Left cardiac atrium (tissue), 4 donors: ENCODE measurements at regions of chr2 and their contacts with region 1.

Region 1: GRCh38 chr2:68196120-68196716 is 38.5 kb downstream of the PNO1 start:
- DNase-seq: peak; percentile 28
- ATAC-seq: no peak

Region 2: DNA sequence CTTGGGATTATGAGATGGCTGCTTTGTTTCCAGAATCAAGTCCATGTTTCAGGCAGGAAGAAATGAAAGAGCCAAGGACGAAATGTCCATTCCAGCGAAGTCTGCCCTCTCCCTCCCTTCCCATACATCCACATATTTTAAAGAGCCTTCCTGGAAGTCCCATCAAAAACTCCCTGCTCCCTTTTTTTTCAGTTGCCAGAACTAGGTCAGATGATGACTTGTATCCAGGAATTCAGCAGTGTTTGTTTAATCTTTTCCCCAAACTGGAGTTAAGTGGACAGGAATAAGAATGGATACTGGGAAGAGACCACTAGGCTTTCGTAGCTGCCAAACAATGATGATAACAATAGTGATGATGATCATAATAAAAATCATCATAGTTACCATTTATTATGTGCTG is 1562.6 kb before region 1 on chr2:
- intact Hi-C with region 1: no loop called
- DNase-seq: no peak
- ATAC-seq: no peak

Region 3: DNA sequence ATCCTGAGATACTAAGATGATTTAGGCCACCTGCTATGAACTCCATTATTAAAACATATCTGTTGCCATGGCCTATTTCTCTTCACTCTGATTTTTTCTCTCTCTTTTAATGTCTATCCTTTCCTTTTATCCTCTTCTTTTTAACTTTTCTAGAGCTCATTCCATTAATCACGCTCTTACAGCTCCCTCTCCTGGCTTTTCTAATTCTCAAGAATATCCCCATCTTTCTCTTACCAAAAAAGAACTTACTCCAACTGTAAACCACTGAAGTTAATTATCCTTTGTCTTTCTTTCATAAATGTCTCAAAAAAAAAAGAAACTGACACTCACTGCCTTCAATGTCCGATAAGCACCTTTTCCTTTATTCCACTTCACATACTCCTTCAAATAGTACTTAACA is 48.2 kb after region 1 on chr2:
- intact Hi-C with region 1: loop called (anchors 5 to 10 kb)
- DNase-seq: no peak
- ATAC-seq: no peak

Region 4: GRCh38 chr2:68251187-68251854 is 55.1 kb after region 1 on chr2:
- intact Hi-C with region 1: loop called (anchors 5 to 10 kb)
- DNase-seq: peak; percentile 66
- ATAC-seq: peak; percentile 45 to 63

Region 5: DNA sequence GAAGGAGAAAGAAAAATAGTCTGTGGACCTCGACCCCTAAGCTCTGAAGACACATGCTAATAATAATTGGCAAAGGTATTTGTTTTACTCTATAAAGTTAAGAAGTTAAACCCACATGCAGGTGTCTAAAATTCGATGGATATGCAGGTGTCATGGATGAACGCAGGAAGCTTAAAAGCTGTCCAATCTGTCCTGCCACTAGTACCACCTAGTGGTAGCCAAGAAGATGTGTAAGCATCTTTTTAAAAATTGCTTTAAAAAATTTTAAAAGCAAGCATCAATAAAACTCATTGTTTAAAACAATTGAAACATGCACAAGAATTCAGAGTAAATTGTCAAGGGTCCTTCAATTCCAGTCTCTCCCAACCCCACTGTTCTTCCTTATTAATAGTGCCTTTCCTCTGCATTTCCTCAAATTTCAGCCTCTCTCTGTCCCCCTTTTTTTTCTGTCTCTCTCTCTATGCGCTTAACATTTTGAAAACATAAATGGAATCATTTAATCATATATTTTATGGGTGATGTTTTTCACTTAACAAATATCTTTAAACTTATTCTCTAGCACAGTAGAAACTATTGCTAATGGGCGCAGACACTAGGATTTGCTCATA is 86.7 kb after region 1 on chr2:
- intact Hi-C with region 1: loop called (anchors 10 kb)
- DNase-seq: no peak
- ATAC-seq: peak in 1 of 2 donors; percentile 41

Region 6: DNA sequence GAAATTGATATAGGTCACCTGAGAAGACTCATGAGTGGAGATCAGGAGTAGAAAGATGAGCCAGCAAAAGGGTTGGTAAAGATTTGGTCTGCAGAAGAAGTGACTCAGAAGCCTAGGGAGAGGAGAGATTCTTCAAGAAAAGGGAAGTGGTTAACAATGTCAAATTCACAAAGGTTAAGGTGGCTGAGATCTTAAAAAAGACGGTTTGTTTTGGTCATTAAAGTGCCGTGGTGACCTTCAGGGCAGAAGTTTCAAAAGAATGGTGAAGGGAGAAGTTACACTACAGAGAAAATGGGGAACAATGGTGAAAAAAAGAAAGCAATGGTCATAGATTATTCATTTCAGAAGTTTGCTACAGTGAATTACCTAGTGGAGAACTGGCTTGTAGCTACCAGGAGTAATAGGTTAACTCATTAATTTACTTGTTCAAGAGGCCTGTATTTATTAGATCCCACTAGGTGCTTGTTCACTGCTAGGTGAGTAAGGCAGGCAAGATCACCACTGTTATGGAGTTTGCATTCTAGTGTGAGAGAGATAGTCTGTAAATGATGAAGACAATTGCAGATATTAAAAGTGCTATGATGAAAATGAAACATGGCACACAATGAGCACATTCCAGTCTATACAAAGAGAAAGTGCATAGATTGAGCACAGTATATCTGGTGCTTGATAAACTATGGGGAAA is 227.9 kb after region 1 on chr2:
- intact Hi-C with region 1: no loop called
- DNase-seq: no peak
- ATAC-seq: no peak